ENCODE measurements at regions of chr20 and their contacts with region 1.

Region 1: DNA sequence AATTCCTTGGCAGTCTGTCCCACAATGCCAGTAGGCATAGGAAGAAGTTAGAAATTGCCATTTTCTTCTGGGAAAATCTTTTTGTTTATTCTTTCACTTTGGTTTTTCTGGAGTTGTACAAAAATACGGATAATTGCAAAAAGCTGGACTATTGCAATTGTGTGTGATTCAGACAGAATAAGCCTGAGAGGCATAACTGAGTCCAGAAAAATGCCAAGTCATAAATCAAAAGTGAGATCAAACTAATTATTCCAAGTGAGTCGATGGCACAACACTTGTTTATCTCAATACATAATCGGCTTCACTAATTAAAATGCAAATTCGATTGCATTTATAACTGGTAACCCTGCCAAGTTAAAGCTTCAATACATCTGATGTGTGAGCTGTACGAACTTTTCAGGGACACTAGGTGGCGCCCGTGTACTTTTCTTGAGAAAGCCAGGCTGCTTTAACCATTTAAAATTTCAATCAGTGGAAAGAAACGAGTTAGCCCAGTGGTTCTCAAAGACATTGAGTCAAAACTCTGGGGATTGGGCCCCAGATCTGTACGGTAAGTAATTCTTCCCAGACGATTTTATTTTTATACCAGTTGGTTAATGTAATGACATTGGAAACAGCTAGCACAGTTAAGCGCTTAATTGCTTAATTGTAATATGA is 102.6 kb downstream of the LAMP5 start:
- DNase-seq: peak in 8 of 10 donors; percentile 24 to 93 (median 66)

Region 2: DNA sequence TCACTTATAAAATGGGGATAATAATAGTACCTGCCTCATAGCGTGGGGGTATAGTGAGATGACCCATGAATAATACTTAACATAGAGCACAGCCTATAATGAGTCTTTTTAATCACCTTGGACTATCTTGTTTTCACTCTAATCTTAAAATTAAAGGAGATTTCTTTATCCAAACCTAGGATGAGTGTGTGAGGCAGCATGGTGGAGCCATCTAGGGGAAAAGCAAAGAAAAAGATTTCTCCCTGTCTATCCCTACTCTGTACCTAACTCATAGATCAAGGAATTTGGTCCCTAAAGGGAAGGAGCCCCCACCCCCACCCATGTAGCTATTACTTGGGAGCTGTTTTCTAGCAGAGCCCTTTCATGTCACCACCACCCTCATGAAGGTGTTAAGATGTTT is 267.1 kb after region 1 on chr20:
- intact Hi-C with region 1: loop called (anchors 1 kb)
- DNase-seq: no peak

Region 3: GRCh38 chr20:9912858-9913434 is 296.0 kb after region 1 on chr20:
- intact Hi-C with region 1: loop called (anchors 1 kb)
- DNase-seq: peak in 7 of 10 donors; percentile 24 to 75 (median 66)

Region 4: DNA sequence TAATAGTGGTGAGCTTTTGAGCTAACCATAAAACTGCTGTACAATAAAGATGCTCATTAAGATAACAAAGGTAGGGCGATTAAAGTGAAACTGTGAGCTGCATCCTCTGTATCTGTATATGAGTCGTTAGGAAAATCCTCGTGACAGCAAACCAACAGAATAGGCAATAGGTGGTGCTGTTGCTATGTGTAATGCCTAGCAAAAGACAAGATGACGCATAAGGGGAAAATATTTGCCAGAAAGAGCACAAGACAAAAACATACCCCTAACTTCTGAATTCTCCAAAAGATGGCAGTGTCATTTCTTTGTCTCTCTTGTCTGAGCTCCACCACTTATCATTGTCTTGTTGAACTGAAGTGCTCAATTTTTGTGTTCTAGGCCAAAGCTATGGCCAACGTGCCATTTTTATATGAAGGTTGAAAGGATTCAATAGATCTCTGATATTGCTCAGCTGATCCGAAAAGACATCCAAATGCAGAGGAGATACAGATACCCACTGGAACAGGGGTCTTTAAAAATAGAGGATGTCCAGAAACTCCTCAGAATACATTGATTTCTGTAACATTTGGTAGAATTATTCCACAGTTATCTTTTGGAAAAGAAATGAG is 361.5 kb after region 1 on chr20:
- intact Hi-C with region 1: loop called (anchors 1 kb)
- DNase-seq: peak in 3 of 10 donors; percentile 18 to 24 (median 18)

Region 5: DNA sequence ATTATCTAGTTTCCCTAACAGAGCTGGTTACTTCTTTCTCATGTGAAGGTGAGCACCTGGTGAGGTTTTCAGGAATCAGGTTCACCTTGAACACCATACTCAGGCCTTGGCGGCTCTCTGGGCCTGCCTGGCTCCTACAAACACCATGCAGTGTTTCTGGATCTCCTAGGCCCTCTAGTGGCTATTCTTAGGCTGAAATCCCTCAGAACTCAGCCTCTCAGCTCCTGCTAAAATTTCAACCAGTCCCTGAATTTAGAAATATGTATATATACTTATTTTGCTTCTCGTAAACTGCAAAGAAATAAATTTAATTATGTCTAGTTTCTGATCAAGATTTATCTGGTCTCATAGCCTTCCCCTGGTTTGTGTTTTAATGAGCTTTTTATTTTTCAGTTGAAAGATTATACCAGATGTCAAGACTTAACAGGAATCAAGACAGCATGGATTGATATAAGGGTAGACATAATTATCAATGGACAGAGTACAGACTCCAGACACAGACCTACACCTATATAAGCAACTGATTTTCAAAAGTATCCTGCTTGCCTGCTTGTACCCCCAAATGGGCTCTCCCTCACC is 473.7 kb after region 1 on chr20:
- intact Hi-C with region 1: loop called (anchors 5 kb)
- DNase-seq: peak in 7 of 10 donors; percentile 36 to 85 (median 49)

Region 6: GRCh38 chr20:10427060-10427692 is 810.2 kb after region 1 on chr20:
- intact Hi-C with region 1: loop called (anchors 5 kb)
- DNase-seq: peak in 9 of 10 donors; percentile 35 to 93 (median 59)

Measured in posterior cingulate gyrus (tissue), 11 donors.